ENCODE measurements at regions of chr2 and their contacts with region 1.

Region 1: DNA sequence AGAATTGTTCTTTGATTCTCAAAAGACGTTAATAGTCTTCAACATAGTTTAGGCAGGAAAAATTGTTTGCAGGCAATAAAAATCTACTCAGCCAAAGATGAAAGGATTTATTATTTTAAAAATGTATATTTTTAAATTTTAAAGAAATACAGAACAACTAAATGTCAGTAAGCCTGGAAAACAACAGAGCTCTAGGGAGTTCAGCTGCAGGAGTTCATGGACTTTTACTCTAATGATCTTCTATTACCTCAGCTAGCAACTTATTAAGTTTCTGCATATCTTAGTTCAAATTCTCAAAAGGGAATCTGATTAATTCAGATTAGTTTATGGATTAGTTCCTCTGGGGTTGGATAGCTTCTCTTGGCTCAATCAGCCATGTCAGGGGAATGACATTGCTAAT is 17.9 kb upstream of the XIRP2 start:
- DNase-seq: no peak
- ATAC-seq: no peak
- H3K4me3 Mint-ChIP-seq: no peak overlapping the region
- H3K27ac Mint-ChIP-seq: no peak overlapping the region
- H3K4me1 Mint-ChIP-seq: no peaks in the 10 kb centered on the region
- H3K27me3 Mint-ChIP-seq: no peaks in the 10 kb centered on the region
- CTCF ChIP-seq: no peak

Region 2: GRCh38 chr2:166695154-166695553 is 175.2 kb before region 1 on chr2:
- CTCF ChIA-PET with region 1: no interaction called
- POLR2A ChIA-PET with region 1: no interaction called
- intact Hi-C with region 1: loop called (anchors 10 kb)
- DNase-seq: no peak
- ATAC-seq: no peak
- H3K4me3 Mint-ChIP-seq: no peak overlapping the region
- H3K27ac Mint-ChIP-seq: no peak overlapping the region
- H3K4me1 Mint-ChIP-seq: no peaks in the 10 kb centered on the region
- H3K27me3 Mint-ChIP-seq: no peaks in the 10 kb centered on the region
- CTCF ChIP-seq: no peak

Region 3: DNA sequence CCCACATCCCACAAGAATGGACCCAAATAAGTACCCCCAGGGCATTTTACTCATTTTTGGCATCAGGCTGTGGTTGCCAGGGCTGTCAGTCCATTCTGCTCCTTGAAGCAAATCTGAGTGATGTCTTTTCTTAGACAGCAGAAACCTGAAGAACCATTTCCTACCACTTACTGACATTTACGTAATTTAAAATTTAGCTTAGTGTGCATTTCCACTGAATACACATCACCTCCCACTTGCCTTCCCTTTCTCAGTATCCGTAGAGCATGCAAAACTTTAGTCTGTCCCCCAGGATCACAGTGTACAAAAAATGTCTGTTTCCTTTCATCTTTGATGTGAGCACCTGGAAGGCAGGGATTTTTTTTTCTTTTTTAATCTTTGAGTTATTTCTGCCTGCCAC is 148.2 kb after region 1 on chr2:
- CTCF ChIA-PET with region 1: no interaction called
- POLR2A ChIA-PET with region 1: no interaction called
- intact Hi-C with region 1: no loop called
- DNase-seq: no peak
- ATAC-seq: no peak
- H3K4me3 Mint-ChIP-seq: no peak overlapping the region
- H3K27ac Mint-ChIP-seq: no peak overlapping the region
- H3K4me1 Mint-ChIP-seq: no peaks in the 10 kb centered on the region
- H3K27me3 Mint-ChIP-seq: no peaks in the 10 kb centered on the region
- CTCF ChIP-seq: no peak

Region 4: DNA sequence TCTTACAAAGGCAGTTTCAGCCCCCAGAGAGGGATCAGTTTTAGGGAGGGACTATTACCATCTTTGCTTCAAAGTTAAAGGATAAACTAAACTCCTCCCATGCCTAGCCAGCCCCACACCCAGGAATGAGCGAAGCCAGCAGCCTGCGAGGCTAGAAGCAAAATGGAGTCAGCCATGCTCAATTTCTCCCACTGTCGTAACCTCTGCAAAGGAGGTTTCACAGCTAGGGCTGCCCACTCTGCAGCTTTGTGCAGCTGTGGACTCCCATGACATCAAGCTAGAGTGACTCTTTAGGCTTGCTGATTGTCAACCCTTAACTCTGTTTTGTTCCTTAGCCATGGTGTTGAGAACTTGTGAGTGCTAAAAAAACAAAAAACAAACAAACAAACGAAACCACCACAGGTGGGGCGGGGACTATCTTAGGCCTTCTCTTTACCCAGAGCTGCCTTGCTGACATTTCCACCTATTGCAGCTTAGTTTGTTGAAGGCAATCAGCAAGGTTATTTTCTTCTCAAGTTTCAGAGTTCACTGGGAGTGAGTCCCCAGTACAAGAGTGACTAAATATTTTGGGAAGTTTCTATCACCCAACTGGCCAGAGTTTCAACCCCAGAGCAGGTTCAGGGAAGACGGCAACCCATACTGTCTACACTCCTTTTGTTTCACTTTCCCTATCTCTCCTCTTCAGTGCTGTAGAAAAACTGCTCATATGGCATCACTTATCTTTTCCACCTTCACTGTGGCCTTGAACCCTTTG is 610.1 kb after region 1 on chr2:
- CTCF ChIA-PET with region 1: no interaction called
- POLR2A ChIA-PET with region 1: no interaction called
- intact Hi-C with region 1: no loop called
- DNase-seq: no peak
- ATAC-seq: no peak
- H3K4me3 Mint-ChIP-seq: no peak overlapping the region
- H3K27ac Mint-ChIP-seq: no peak overlapping the region
- H3K4me1 Mint-ChIP-seq: no peaks in the 10 kb centered on the region
- H3K27me3 Mint-ChIP-seq: no peaks in the 10 kb centered on the region
- CTCF ChIP-seq: no peak